Colonic mucosa (tissue), 4 donors: ENCODE measurements at regions of chr11 and their contacts with region 1.

Region 1: DNA sequence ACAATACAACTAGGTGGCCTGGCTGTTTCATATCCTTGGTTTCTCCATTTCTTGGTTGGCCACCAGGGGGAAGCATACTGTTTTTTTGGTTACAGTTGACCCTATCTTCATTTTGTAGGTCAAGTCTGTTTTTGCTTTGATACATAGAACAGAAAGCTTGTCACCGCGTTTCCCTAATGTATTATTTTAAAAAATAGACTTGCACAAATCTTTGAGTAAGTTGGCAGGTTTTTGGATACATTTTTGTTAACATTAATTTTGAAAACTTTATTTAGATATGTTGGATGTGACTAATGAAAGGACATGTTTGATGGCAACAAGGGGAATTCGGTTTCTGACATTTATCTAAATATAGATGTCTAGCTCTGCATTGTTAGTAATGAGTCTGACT is 3.0 kb downstream of the NCR3LG1 start:
- DNase-seq: peak; percentile 91
- H3K4me3 ChIP-seq: no peak overlapping the region
- H3K27ac ChIP-seq: no peak overlapping the region
- H3K4me1 ChIP-seq: no peaks in the 10 kb centered on the region
- H3K27me3 ChIP-seq: no peaks in the 10 kb centered on the region
- CTCF ChIP-seq: peak; percentile 62

Region 2: GRCh38 chr11:17276236-17277023 is 78.2 kb before region 1 on chr11 and contains the start of gene NUCB2:
- intact Hi-C with region 1: loop called (anchors 5 kb)
- DNase-seq: peak; percentile 98
- H3K4me3 ChIP-seq: peak within 1 kb of the TSS; percentile 84
- H3K27ac ChIP-seq: peak within 1 kb of the TSS; percentile 88
- H3K4me1 ChIP-seq: no peaks in the 10 kb centered on the region
- H3K27me3 ChIP-seq: no peaks in the 10 kb centered on the region
- CTCF ChIP-seq: no peak
- total RNA-seq, gene NUCB2: 60.9 to 111 TPM